PC-3 (cell line): ENCODE measurements at regions of chr5 and their contacts with region 1.

Region 1: GRCh38 chr5:172315587-172316493 is 32.3 kb upstream of the UBTD2 start:
- DNase-seq: no peak
- ATAC-seq: peak; percentile 41
- H3K4me3 ChIP-seq: peak overlapping the region; percentile 17; the same call in 1 of the 2 replicates
- H3K27ac ChIP-seq: peak overlapping the region; percentile 73
- H3K4me1 ChIP-seq: peaks cover 25% of the 10 kb centered on the region
- H3K27me3 ChIP-seq: no peaks in the 10 kb centered on the region
- CTCF ChIP-seq: no peak

Region 2: GRCh38 chr5:171872666-171873065 is 443.2 kb before region 1 on chr5:
- CTCF ChIA-PET with region 1: no interaction called
- POLR2A ChIA-PET with region 1: interaction called, 10 read pairs
- intact Hi-C with region 1: no loop called
- DNase-seq: no peak
- ATAC-seq: no peak
- H3K4me3 ChIP-seq: no peak overlapping the region
- H3K27ac ChIP-seq: no peak overlapping the region
- H3K4me1 ChIP-seq: no peaks in the 10 kb centered on the region
- H3K27me3 ChIP-seq: no peaks in the 10 kb centered on the region
- CTCF ChIP-seq: no peak